Left cardiac atrium (tissue), 4 donors: ENCODE measurements at regions of chr5 and their contacts with region 1.

Region 1: GRCh38 chr5:128498844-128499455 is 39.1 kb downstream of the FBN2 start:
- DNase-seq: no peak
- ATAC-seq: no peak

Region 2: GRCh38 chr5:127564002-127564769 is 934.8 kb before region 1 on chr5:
- intact Hi-C with region 1: loop called in 1 of 2 experiments (anchors 5 kb)
- DNase-seq: no peak
- ATAC-seq: peak; percentile 47 to 75

Region 3: GRCh38 chr5:128135286-128135685 is 363.7 kb before region 1 on chr5:
- intact Hi-C with region 1: no loop called
- DNase-seq: no peak
- ATAC-seq: no peak

Region 4: GRCh38 chr5:128213340-128213739 is 285.6 kb before region 1 on chr5:
- intact Hi-C with region 1: loop called (anchors 2 to 5 kb)
- DNase-seq: peak; percentile 34
- ATAC-seq: no peak